BJ (cell line): ENCODE measurements at regions of chr6 and their contacts with region 1.

Region 1: DNA sequence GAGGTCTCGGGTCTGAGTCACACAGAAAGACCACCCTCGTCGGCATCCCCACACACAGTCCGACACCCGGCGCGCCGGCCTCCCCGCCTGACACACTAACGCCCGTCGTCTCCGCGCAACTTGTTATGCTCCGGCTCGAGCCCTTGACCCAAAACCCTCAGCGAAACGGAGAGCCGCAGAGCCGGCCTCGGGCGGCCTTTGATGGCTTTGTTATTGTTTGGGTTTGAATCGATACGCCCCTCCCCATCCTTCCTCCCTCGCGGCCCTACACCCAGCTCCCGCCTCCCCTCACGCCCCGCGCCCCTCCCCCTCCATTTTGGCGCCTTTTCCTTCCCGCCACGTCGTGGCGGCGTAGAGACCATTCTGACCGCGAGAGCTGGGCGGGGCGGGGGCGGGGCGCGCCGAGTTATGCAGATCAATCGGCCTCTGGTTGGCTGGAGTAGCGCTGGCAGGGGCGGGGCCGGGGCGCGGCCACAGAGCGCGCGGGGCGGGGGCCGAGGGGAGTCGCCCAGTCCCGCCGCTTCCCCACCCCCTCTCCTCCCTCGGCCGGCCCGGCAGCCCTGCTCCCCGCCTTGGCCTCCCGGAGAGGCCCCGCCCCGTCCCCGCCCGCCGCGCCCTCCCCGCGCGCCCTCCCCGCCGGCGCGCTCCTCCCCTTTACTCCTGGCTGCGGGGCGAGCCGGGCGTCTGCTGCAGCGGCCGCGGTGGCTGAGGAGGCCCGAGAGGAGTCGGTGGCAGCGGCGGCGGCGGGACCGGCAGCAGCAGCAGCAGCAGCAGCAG is at the start of gene PIM1:
- DNase-seq: peak; percentile 69
- H3K4me3 ChIP-seq: peak within 1 kb of the TSS; percentile 86
- H3K27me3 ChIP-seq: no peaks in the 10 kb centered on the region
- CTCF ChIP-seq: no peak
- polyA plus RNA-seq, gene PIM1: 13.9 and 20.7 TPM in 2 replicates

Region 2: GRCh38 chr6:37029249-37029971 is 140.3 kb before region 1 on chr6:
- CTCF ChIA-PET with region 1: interaction called, 56 read pairs
- POLR2A ChIA-PET with region 1: interaction called, 3 read pairs
- DNase-seq: peak; percentile 41
- H3K4me3 ChIP-seq: no peak overlapping the region
- H3K27me3 ChIP-seq: no peaks in the 10 kb centered on the region; the same call in none of the 2 replicates
- CTCF ChIP-seq: peak; percentile 81

Region 3: GRCh38 chr6:37072526-37072925 is 97.2 kb before region 1 on chr6:
- CTCF ChIA-PET with region 1: interaction called, 17 read pairs
- POLR2A ChIA-PET with region 1: no interaction called
- DNase-seq: no peak
- H3K4me3 ChIP-seq: no peak overlapping the region
- H3K27me3 ChIP-seq: peaks cover 1% of the 10 kb centered on the region; the same call in 1 of the 2 replicates
- CTCF ChIP-seq: no peak

Region 4: GRCh38 chr6:37137201-37138090 is 32.2 kb before region 1 on chr6:
- CTCF ChIA-PET with region 1: interaction called, 21 read pairs
- POLR2A ChIA-PET with region 1: interaction called, 3 read pairs
- DNase-seq: peak; percentile 98
- H3K4me3 ChIP-seq: peak overlapping the region; percentile 2; the same call in 1 of the 2 replicates
- H3K27me3 ChIP-seq: no peaks in the 10 kb centered on the region
- CTCF ChIP-seq: no peak

Region 5: GRCh38 chr6:37207903-37208456 is 38.3 kb after region 1 on chr6:
- CTCF ChIA-PET with region 1: interaction called, 31 read pairs
- POLR2A ChIA-PET with region 1: no interaction called
- DNase-seq: no peak
- H3K4me3 ChIP-seq: no peak overlapping the region
- H3K27me3 ChIP-seq: no peaks in the 10 kb centered on the region; the same call in 1 of the 2 replicates
- CTCF ChIP-seq: peak; percentile 89

Region 6: DNA sequence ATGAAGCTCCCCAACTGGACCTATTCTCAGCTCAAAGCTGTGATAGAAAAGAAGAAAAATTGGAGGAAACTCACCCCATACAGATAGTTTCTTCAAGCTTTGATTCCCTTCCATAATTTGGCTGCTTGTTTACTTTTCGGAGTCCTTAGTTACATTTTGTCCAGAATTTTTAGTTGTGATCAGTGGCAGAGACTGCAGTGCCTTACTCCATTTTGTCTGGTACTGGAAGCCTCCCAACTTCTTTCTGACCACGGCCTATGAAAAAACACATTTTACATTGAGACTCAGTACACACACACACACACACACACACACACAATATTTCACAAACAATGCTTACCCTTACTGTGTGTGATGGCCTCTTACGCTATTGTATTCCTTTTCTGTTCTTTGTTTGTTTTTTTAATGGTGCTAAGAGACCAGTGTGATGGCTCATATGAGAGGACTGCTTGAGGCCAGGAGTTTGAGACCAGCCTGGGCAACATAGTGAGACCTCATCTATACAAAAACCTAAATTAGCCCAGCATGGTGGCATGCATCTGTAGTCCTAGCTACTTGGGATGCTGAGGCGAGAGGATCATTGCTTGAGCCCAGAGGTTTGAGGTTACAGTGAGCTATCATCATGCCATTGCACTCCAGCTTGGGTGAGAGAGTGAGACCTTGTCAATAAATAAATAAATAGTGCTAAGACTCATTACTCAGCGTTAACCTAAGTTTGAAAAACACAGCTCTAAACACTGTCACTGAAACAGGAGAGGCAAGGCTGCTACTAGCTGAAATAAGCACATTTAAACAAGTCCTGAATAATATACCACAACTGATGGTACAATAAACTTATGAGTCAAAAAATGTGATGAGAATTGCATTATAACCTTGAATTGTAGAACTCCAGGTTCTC is 170.3 kb after region 1 on chr6:
- CTCF ChIA-PET with region 1: no interaction called
- POLR2A ChIA-PET with region 1: no interaction called
- DNase-seq: no peak
- H3K4me3 ChIP-seq: no peak overlapping the region
- H3K27me3 ChIP-seq: peaks cover 2% of the 10 kb centered on the region
- CTCF ChIP-seq: no peak